ENCODE measurements at regions of chr2 and their contacts with region 1.

Region 1: GRCh38 chr2:143128681-143129580 is at the start of gene ARHGAP15:
- DNase-seq: peak; percentile 80 to 90 (median 84)
- H3K4me3 ChIP-seq: peak within 1 kb of the TSS; percentile 64 to 87
- H3K4me3 Mint-ChIP-seq: peak within 1 kb of the TSS; percentile 79 to 92 (median 89)
- H3K27ac ChIP-seq: peak within 1 kb of the TSS; percentile 70
- H3K27ac Mint-ChIP-seq: peak within 1 kb of the TSS; percentile 73 to 98 (median 96)
- H3K4me1 ChIP-seq: peaks cover 76% of the 10 kb centered on the region
- H3K4me1 Mint-ChIP-seq: peaks cover 31 to 42% (median 34%) of the 10 kb centered on the region in 4 donors
- H3K27me3 ChIP-seq: no peaks in the 10 kb centered on the region
- H3K27me3 Mint-ChIP-seq: no peaks in the 10 kb centered on the region
- total RNA-seq, gene ARHGAP15: 218 to 225 TPM

Region 2: DNA sequence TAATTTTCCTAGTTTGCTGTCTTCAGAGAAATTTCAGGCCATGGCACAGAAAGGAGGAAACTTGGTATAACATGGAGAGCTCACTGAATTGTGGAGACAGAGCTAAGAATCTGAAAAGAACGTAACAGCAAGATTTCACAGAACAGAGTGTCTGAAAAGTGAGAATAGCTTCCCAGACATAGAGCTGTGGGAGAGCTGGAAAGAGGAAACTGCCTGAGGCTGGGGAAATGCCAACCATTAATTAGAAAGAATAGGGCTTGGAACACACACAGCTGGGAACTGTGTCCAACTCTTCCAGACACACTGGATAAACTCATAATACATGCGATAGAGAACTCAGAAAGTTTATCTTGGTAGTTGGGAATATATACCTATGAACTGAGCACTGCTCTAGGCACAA is 303.1 kb before region 1 on chr2:
- CTCF ChIA-PET with region 1: no interaction called
- POLR2A ChIA-PET with region 1: no interaction called
- intact Hi-C with region 1: no loop called
- DNase-seq: no peak
- H3K4me3 ChIP-seq: no peak overlapping the region
- H3K4me3 Mint-ChIP-seq: no peak overlapping the region
- H3K27ac ChIP-seq: no peak overlapping the region
- H3K27ac Mint-ChIP-seq: no peak overlapping the region
- H3K4me1 ChIP-seq: no peaks in the 10 kb centered on the region
- H3K4me1 Mint-ChIP-seq: no peaks in the 10 kb centered on the region
- H3K27me3 ChIP-seq: no peaks in the 10 kb centered on the region
- H3K27me3 Mint-ChIP-seq: no peaks in the 10 kb centered on the region

Region 3: DNA sequence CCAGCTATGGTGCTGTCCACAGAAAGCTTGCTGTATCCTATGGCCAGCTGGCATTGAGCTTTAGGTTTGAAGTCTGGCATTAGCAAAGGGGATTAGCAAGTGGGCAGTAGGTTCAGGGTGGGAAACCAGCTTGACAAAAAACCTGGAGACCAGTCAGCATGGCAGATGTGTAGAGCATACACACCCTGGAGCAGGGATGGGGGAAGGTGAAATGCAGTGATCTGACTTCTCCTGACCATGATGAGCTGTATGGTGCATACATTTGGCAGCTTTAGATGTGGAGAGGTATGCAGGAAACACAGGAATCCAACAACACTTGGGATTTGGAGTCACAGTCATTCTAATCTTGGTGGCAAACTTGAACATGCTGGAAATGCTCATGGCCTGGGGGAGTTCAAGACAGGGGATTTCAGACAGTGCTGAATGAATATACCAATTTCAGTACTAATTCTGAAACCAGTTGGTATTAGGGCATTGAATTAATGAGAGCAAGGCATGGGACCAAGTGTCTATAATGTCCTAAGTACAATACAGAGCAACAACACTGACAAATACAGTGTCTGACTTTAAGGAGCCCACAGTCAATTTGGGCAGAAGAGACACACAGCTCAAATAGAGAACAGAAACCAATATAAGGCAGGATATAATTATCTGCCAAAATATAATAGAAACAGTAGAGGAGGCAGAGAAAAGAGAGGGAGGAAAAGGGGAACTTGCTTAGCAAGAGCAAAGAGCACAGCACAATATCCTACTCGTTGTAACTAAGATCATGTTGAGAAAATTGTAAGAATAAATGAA is 12.1 kb after region 1 on chr2:
- CTCF ChIA-PET with region 1: interaction called, 20 read pairs
- POLR2A ChIA-PET with region 1: interaction called, 10 read pairs
- intact Hi-C with region 1: loop called (anchors 1 kb)
- DNase-seq: no peak
- H3K4me3 ChIP-seq: peak overlapping the region in 1 of 2 donors; percentile 4
- H3K4me3 Mint-ChIP-seq: peak overlapping the region; percentile 63 to 88 (median 78)
- H3K27ac ChIP-seq: no peak overlapping the region
- H3K27ac Mint-ChIP-seq: peak overlapping the region in 5 of 7 donors; percentile 45 to 76 (median 62)
- H3K4me1 ChIP-seq: peaks cover 97% of the 10 kb centered on the region
- H3K4me1 Mint-ChIP-seq: peaks cover 77 to 98% (median 86%) of the 10 kb centered on the region in 4 donors
- H3K27me3 ChIP-seq: no peaks in the 10 kb centered on the region
- H3K27me3 Mint-ChIP-seq: no peaks in the 10 kb centered on the region

Region 4: DNA sequence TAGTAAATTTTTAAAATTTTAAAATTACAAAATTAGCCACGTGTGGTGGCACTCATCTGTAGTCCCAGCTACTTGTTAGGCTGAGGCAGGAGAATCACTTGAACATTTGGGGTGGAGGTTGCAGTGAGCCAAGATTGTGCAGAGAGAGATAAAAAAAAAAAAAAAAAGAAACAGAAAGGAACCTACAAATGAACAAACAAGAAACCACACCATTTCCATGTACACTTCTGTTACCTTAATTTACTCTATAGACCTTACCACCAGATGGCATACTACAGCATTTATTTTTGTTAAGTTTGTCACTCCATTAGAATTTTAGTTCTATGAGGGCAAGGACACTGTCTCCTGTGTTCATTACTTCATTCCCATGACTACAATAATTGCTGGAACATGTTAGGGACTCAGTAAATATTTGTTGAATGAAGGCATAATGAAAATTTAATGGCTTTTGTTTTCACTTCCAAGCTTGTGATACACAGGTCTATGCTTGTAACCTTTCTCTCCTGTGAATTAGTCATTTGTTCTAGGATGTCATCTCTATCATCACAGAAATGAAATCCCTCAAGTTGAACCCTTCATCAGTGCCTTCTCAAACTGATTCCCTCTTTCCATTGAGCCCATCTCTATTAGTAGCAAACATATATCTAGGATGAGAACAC is 76.3 kb after region 1 on chr2:
- CTCF ChIA-PET with region 1: interaction called, 8 read pairs
- POLR2A ChIA-PET with region 1: interaction called, 6 read pairs
- intact Hi-C with region 1: loop called (anchors 1 kb)
- DNase-seq: peak in 4 of 5 donors; percentile 54 to 60 (median 57)
- H3K4me3 ChIP-seq: no peak overlapping the region
- H3K4me3 Mint-ChIP-seq: peak overlapping the region in 4 of 8 donors; percentile 16 to 64 (median 34)
- H3K27ac ChIP-seq: no peak overlapping the region
- H3K27ac Mint-ChIP-seq: peak overlapping the region in 5 of 7 donors; percentile 39 to 77 (median 67)
- H3K4me1 ChIP-seq: peaks cover 42% of the 10 kb centered on the region
- H3K4me1 Mint-ChIP-seq: peaks cover 55 to 66% (median 57%) of the 10 kb centered on the region in 4 donors
- H3K27me3 ChIP-seq: no peaks in the 10 kb centered on the region
- H3K27me3 Mint-ChIP-seq: no peaks in the 10 kb centered on the region

Measured in CD4-positive, alpha-beta memory T cell (primary cell).